Posterior cingulate gyrus (tissue), 11 donors: ENCODE measurements at regions of chr22 and their contacts with region 1.

Region 1: DNA sequence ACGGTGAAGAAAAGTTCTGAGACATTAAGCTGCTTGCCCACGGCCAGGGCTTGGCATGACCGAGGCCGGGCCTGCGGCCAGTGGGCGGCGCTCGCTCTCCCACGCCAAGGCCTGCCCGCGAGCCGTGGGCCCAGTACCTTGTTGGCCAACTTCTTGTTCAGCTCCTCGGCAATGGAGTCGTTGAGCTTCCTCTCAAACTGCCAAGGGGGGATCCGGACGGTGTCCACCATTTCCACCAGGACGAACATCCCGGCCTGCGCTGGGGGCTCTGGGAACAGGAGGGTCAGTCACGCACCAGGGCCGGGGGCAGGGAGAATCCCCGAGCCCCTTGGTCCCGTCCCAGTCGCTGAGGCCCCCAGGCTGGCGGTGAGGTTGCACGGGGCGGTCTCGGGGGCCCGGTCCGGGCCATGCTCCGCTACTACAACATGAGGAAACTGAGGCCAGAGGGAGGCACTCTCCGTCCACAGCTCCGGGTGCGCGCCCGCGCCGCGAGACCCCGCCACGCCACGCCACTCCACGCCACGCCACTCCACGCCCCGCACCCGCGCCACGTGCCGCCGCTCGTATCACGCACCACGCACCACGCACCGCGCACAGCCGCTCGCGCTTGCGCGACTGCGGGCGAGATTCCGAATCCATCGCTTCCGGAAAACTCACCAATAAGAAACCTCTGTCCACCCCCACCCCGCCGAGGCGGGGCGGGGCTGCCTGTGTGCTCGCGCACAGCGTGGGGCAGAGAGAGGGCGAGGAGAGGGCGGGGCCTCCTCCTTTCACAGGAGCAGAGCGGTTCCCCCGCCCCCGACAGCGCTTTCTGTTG is at the start of gene POLR3H:
- DNase-seq: peak; percentile 96 to 100 (median 98)

Region 2: DNA sequence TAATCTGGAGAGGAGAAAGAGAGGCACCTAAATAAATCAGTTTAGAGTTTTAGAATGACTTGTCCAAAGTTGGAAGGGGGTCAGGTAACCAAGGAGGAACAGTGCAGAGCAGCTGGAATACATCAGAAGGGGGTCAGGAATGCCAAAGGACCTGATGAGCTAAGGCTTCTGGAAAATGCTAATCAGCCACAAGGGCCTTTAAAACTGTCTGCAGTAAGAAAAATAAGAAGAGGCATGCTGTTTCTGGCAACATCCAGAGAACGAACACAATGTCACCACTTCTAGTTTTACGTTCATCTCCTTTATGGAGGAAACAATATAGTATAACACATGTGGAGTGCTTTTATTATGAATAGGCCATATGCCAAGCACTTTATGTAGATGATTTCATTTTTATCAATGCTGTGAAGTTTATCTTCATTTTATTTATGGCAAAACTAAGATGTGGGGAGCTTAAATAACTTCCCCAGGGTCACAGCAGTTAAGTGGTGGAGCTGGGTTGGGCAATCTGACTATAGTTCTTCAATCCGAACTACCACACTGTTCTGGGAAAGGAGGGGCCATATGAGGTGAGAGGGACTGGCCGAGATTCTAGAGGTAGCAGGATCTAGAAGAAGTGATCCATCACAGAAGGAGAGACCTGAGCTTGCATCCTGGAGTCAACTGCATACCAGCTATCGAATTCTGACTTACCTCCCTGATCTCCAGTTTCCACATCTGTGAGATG is 52.5 kb before region 1 on chr22:
- intact Hi-C with region 1: no loop called
- DNase-seq: no peak

Region 3: DNA sequence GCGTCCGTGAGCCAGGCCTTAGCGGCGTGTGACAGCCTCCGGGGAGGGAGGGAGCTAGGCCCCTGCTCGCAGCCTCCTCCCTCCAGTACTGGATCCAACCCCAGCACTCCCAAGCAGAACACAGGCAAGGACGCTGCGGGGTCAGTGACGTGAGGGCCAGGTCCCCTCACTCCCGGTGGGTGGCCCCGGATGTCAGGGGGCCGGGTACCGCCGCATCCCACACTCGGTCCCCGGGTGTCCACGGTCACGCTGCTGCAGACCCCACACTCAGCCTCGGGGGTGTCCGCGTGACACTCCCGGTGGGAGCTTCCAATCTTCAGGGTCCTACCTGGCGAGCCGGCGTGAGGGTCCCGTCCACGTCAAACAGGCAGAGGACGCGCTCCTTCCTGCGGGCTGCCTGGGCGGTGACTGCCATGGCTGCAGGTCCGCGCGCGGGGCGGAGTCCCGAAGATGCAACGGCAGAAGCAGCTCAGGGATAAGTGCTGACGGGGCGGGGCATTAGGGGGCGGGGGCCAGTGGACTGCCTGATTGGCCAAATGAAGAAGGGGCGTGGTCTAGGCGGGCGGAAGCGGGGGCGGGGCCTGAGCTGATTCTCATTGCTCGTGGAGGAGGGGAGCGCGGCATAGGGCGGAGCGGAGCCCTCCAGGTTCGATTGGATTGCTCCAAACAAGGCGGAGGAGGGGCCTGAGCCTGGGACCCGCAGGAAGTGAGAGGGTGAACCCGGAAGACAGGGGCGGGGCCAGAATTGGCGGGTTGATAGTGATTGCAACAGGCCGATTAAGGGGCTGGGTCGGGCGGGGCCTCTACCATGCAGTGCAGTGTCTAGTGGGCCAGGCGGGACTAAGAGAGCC is 45.6 kb after region 1 on chr22 and contains the start of gene PMM1:
- intact Hi-C with region 1: loop called (anchors 5 kb)
- DNase-seq: peak; percentile 100

Region 4: GRCh38 chr22:41596776-41597634 is 52.9 kb after region 1 on chr22:
- intact Hi-C with region 1: loop called (anchors 2 kb)
- DNase-seq: peak; percentile 38 to 94 (median 54)

Region 5: DNA sequence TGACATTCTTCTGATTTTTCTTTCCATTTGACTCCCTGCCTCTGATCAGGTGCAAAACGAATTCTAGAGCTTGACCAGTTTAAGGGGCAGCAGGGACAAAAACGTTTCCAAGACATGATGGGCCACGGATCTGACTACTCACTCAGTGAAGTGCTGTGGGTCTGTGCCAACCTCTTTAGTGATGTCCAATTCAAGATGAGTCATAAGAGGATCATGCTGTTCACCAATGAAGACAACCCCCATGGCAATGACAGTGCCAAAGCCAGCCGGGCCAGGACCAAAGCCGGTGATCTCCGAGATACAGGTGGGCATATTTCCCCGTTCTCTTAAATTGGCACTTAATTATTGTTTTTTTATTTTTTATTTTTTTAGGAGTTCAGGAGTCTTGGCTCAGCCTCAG is 92.4 kb after region 1 on chr22:
- intact Hi-C with region 1: no loop called
- DNase-seq: peak in 5 of 10 donors; percentile 19 to 89 (median 81)